Activated B cell treated with CpG ODN at 0.5 μM for 24 hours (primary cell): ENCODE measurements at regions of chr2 and their contacts with region 1.

Region 1: DNA sequence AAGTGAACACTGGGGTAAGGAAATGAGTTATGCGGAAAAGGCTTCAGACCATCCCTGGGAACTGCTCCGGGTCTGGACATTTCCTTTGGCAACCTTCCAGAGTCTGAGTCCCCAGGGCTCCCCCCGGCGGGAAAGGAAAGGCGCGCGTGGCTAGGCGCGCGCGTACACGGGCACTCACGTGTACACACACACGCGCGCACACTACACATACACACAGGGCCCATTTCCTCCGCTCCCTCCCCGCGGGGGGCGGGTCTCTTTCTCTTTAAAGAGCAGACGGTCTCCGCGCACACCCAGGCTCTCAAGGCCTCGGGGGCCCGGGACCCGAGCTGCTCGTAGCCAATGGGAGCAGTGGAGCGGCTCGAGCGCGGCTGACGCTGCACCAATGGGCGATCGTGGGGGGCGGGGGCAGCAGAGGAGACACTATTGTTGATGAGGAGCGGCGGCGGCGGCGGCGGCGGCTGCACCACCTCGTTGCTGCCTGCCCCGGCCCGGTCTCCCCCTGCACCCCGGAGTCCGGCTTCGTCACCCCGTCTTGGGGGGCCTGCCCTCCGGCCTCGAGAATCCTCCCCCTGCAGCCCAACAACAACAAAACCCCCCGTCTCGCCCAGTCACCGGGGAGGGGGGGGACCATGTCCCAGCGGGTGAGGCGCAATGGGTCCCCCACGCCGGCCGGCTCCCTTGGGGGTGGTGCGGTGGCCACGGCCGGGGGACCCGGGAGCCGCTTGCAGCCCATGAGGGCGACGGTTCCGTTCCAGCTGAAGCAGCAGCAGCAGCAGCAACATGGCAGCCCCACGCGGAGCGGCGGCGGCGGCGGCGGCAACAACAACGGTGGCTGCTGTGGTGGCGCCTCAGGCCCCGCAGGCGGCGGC is at the start of gene FAM117B:
- DNase-seq: peak; percentile 92
- ATAC-seq: peak; percentile 88
- H3K4me3 Mint-ChIP-seq: peak within 1 kb of the TSS; percentile 95
- H3K27ac Mint-ChIP-seq: peak within 1 kb of the TSS; percentile 100
- H3K4me1 Mint-ChIP-seq: peaks cover 53% of the 10 kb centered on the region
- H3K27me3 Mint-ChIP-seq: no peaks in the 10 kb centered on the region
- CTCF ChIP-seq: no peak
- total RNA-seq, gene FAM117B: 21.3 and 22.5 TPM in 2 replicates

Region 2: GRCh38 chr2:202588647-202589581 is 45.9 kb before region 1 on chr2:
- CTCF ChIA-PET with region 1: interaction called, 19 read pairs
- POLR2A ChIA-PET with region 1: interaction called, 71 read pairs
- intact Hi-C with region 1: loop called (anchors 1 kb)
- DNase-seq: peak; percentile 45
- ATAC-seq: peak; percentile 99
- H3K4me3 Mint-ChIP-seq: peak overlapping the region; percentile 51
- H3K27ac Mint-ChIP-seq: peak overlapping the region; percentile 54
- H3K4me1 Mint-ChIP-seq: peaks cover 19% of the 10 kb centered on the region
- H3K27me3 Mint-ChIP-seq: no peaks in the 10 kb centered on the region
- CTCF ChIP-seq: no peak

Region 3: DNA sequence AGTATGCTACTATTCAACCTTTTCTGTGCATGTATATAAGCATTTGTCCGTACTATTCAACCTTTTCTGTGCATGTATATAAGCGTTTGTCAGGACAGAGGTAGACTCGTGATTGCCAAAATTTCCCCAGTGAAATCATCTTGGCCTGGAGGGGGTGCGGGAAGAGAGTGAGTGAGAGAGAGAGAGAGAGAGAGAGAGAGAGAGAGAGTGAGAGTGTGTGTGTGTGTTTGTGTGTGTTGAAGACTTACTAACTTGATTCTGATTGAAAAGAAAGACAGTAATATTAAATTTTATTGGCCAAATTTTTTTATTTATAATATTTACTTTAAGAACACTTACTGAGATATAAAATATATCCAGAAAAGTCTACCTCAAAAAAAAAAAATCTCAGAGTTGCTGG is 19.1 kb after region 1 on chr2:
- CTCF ChIA-PET with region 1: no interaction called
- POLR2A ChIA-PET with region 1: interaction called, 34 read pairs
- intact Hi-C with region 1: no loop called
- DNase-seq: no peak
- ATAC-seq: no peak
- H3K4me3 Mint-ChIP-seq: peak overlapping the region; percentile 56
- H3K27ac Mint-ChIP-seq: peak overlapping the region; percentile 82
- H3K4me1 Mint-ChIP-seq: peaks cover 88% of the 10 kb centered on the region
- H3K27me3 Mint-ChIP-seq: no peaks in the 10 kb centered on the region
- CTCF ChIP-seq: no peak

Region 4: DNA sequence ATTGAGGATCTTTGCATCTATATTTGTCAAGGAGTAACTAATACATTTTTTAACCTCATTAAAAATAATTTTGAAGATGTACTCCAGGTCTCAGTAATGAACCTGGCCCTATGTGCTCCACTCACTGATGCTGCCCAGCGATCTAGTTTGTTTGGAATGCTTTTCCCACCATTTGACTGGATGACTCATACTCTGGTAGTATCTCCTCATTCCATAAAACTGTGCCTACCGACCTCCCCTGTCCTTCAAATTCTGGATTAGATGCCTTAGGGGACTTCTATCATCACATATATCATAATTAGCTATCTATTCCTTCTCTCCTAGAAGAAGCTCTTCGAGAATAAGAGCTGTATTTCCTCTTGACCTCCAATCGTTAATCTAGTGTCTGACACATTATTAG is 83.8 kb after region 1 on chr2:
- CTCF ChIA-PET with region 1: interaction called, 10 read pairs
- POLR2A ChIA-PET with region 1: interaction called, 24 read pairs
- intact Hi-C with region 1: no loop called
- DNase-seq: no peak
- ATAC-seq: no peak
- H3K4me3 Mint-ChIP-seq: no peak overlapping the region
- H3K27ac Mint-ChIP-seq: peak overlapping the region; percentile 61
- H3K4me1 Mint-ChIP-seq: peaks cover 38% of the 10 kb centered on the region
- H3K27me3 Mint-ChIP-seq: no peaks in the 10 kb centered on the region
- CTCF ChIP-seq: no peak

Region 5: GRCh38 chr2:202848813-202849212 is 214.0 kb after region 1 on chr2:
- CTCF ChIA-PET with region 1: no interaction called
- POLR2A ChIA-PET with region 1: interaction called, 15 read pairs
- intact Hi-C with region 1: no loop called
- DNase-seq: no peak
- ATAC-seq: peak; percentile 61
- H3K4me3 Mint-ChIP-seq: peak overlapping the region; percentile 46
- H3K27ac Mint-ChIP-seq: peak overlapping the region; percentile 77
- H3K4me1 Mint-ChIP-seq: peaks cover 23% of the 10 kb centered on the region
- H3K27me3 Mint-ChIP-seq: no peaks in the 10 kb centered on the region
- CTCF ChIP-seq: no peak

Region 6: DNA sequence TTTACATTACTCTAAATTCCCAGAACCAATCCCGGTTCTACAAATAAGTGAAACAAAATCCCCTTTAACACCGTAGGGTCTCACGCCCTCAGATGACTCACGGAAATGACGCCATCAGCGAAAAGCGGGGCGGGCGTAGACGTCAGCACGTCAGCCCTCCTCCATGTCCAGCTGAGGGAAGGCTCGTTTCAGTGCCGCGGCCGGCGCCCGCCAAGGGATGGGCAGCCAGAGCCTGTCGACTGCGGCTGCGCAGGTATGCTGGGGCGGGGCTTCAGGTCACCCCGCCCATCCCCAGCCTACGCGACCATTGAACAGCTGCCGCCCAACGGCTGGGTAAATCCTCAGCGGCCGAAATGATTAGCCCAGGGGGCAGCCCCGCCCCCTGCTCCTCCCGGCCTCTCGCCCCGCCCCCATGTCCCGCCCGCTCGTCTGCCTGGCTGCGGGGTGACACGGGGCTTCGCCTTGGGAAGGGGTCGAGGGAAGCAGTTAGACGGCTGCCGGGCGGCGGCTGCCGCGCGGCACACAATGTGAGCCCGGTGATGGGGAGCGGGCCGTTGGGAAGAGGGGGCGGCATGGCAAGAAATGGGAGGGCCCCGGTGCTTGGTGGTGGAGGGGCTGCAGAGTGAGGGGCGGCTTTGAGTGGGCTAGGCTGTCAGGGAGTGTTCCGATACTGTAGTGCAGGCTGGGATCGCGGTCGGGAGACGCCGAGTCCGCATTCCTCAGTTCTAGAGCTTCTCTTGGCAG is 379.8 kb after region 1 on chr2 and contains the start of gene NBEAL1:
- CTCF ChIA-PET with region 1: no interaction called
- POLR2A ChIA-PET with region 1: interaction called, 8 read pairs
- intact Hi-C with region 1: loop called (anchors 1 kb)
- DNase-seq: peak; percentile 100
- ATAC-seq: peak; percentile 93
- H3K4me3 Mint-ChIP-seq: peak within 1 kb of the TSS; percentile 87
- H3K27ac Mint-ChIP-seq: peak within 1 kb of the TSS; percentile 84
- H3K4me1 Mint-ChIP-seq: peaks cover 26% of the 10 kb centered on the region
- H3K27me3 Mint-ChIP-seq: no peaks in the 10 kb centered on the region
- CTCF ChIP-seq: no peak
- total RNA-seq, gene NBEAL1: 8.9 and 9.3 TPM in 2 replicates